CD4-positive, alpha-beta T cell (primary cell): ENCODE measurements at regions of chr1 and their contacts with region 1.

Region 1: GRCh38 chr1:227762233-227762911 is 27.1 kb downstream of the SNAP47 start:
- DNase-seq: peak; percentile 81 to 93 (median 86)
- ATAC-seq: peak; percentile 68
- H3K4me3 ChIP-seq: peak overlapping the region; percentile 6
- H3K4me3 Mint-ChIP-seq: peak overlapping the region; percentile 72
- H3K27ac ChIP-seq: peak overlapping the region in 1 of 2 donors; percentile 53
- H3K27ac Mint-ChIP-seq: peak overlapping the region; percentile 90
- H3K4me1 ChIP-seq: peaks cover 84% of the 10 kb centered on the region
- H3K4me1 Mint-ChIP-seq: peaks cover 75% of the 10 kb centered on the region
- H3K27me3 ChIP-seq: no peaks in the 10 kb centered on the region
- H3K27me3 Mint-ChIP-seq: no peaks in the 10 kb centered on the region
- CTCF ChIP-seq: peak; percentile 96

Region 2: DNA sequence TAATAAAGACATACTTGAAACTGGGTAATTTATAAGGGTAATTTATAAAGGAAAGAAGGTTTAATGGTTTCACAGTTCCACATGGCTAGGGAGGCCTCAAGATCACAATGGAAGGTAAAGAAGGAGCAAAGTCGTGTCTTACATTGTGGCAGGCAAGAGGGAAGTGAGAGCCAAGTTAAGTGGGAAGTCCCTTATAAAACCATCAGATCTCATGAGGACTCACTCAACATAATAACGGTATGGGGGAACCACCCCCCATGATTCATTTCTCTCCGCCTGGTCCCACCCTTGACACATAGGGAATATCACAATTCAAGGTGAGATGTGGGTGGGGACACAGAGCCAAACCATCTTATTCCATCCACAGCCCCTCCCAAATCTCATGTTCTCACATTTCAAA is 275.8 kb before region 1 on chr1:
- CTCF ChIA-PET with region 1: no interaction called
- POLR2A ChIA-PET with region 1: no interaction called
- intact Hi-C with region 1: loop called (anchors 1 to 5 kb)
- DNase-seq: peak in 1 of 14 experiments; percentile 7
- ATAC-seq: no peak
- H3K4me3 ChIP-seq: no peak overlapping the region
- H3K4me3 Mint-ChIP-seq: no peak overlapping the region
- H3K27ac ChIP-seq: no peak overlapping the region
- H3K27ac Mint-ChIP-seq: no peak overlapping the region
- H3K4me1 ChIP-seq: no peaks in the 10 kb centered on the region
- H3K4me1 Mint-ChIP-seq: no peaks in the 10 kb centered on the region
- H3K27me3 ChIP-seq: no peaks in the 10 kb centered on the region
- H3K27me3 Mint-ChIP-seq: peaks cover 3% of the 10 kb centered on the region
- CTCF ChIP-seq: no peak

Region 3: GRCh38 chr1:227787513-227788270 is 25.3 kb after region 1 on chr1:
- CTCF ChIA-PET with region 1: interaction called, 6 read pairs
- POLR2A ChIA-PET with region 1: interaction called, 37 read pairs
- intact Hi-C with region 1: loop called (anchors 2 kb)
- DNase-seq: peak; percentile 94 to 99 (median 96)
- ATAC-seq: peak; percentile 92
- H3K4me3 ChIP-seq: peak overlapping the region; percentile 74
- H3K4me3 Mint-ChIP-seq: peak overlapping the region; percentile 89
- H3K27ac ChIP-seq: peak overlapping the region in 1 of 2 donors; percentile 11
- H3K27ac Mint-ChIP-seq: peak overlapping the region; percentile 82
- H3K4me1 ChIP-seq: peaks cover 39% of the 10 kb centered on the region
- H3K4me1 Mint-ChIP-seq: peaks cover 34% of the 10 kb centered on the region
- H3K27me3 ChIP-seq: no peaks in the 10 kb centered on the region
- H3K27me3 Mint-ChIP-seq: no peaks in the 10 kb centered on the region
- CTCF ChIP-seq: no peak

Region 4: DNA sequence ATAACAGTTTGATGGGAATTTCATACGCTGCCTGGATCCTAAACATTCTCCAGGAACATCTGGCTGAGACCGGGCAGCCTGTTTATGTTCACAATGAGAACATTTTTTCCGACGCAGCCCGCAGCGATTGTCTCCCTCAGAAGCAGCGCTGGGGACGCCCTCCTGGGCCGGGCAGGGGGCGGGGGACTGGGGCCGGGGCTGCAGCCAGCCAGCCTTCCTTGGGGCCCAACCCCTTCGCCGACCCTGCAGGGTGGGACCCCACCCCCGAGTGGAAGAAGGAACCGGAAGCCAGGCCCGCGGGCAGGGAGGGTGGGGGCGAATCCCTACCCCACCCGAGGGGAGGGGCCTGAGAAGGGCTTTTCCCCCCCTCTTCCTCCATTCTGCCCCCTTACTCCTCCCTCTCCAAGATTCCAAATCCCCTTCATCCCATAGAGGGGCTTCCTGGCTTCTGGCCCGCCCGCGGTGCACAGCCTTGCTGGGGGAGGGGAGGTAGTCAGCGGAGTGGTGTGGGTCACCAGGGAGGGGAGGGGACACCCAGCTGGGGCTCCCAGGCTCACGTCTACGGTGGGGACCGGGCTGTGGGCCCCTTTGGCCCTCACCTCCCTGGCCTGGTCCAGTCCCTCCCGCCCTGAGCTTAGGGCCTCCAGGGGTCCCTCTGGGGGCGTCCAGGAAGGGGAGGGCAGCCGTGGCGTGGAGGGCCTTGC is 124.8 kb after region 1 on chr1:
- CTCF ChIA-PET with region 1: no interaction called
- POLR2A ChIA-PET with region 1: no interaction called
- intact Hi-C with region 1: loop called in 1 of 2 experiments (anchors 5 kb)
- DNase-seq: peak in 10 of 14 experiments; percentile 25 to 66 (median 48)
- ATAC-seq: peak; percentile 41
- H3K4me3 ChIP-seq: peak overlapping the region; percentile 44
- H3K4me3 Mint-ChIP-seq: peak overlapping the region; percentile 67
- H3K27ac ChIP-seq: peak overlapping the region in 1 of 2 donors; percentile 64
- H3K27ac Mint-ChIP-seq: peak overlapping the region; percentile 87
- H3K4me1 ChIP-seq: peaks cover 69% of the 10 kb centered on the region
- H3K4me1 Mint-ChIP-seq: peaks cover 39% of the 10 kb centered on the region
- H3K27me3 ChIP-seq: no peaks in the 10 kb centered on the region
- H3K27me3 Mint-ChIP-seq: no peaks in the 10 kb centered on the region
- CTCF ChIP-seq: no peak

Region 5: DNA sequence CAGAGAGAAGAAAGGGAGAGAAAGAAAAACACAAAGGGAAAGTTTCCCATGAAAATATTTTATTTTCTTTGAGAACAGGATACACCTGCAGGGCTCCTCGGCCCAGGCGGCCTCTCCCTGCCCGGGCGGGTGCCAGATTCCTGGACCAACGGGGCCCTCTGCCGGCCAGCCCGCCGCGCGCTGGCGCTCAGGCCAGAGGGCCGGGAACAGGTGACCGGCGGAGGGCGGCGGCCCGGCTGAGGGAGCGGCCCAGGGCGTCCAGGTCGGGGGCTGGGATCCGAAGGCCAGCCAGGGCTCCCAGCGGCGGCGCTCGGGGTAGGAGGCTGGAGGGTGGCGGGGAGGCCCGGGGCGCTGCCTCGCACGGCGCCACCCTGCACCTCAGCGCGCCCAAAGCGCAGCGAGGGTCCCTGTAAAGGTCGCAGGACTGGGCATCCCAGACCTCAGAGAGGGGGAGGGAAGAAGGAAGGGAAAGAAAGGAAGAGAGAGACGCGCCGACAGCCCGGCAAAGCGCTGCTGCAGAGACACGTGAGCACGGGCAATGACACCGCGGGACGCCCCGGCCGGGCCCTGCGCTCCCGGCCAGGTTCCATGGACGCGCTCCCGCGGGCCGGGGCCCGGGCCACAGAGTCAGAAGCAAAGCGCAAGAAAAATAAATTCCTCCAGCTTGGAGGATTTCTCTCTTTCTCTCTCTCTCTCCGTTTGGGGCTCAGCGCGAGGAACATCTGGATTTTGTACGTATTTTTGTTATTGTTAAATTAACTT is 184.4 kb after region 1 on chr1:
- CTCF ChIA-PET with region 1: interaction called, 6 read pairs
- POLR2A ChIA-PET with region 1: interaction called, 6 read pairs
- intact Hi-C with region 1: loop called (anchors 1 to 2 kb)
- DNase-seq: peak in 13 of 14 experiments; percentile 35 to 75 (median 52)
- ATAC-seq: peak; percentile 71
- H3K4me3 ChIP-seq: peak overlapping the region; percentile 33
- H3K4me3 Mint-ChIP-seq: peak overlapping the region; percentile 72
- H3K27ac ChIP-seq: no peak overlapping the region
- H3K27ac Mint-ChIP-seq: no peak overlapping the region
- H3K4me1 ChIP-seq: peaks cover 22% of the 10 kb centered on the region
- H3K4me1 Mint-ChIP-seq: no peaks in the 10 kb centered on the region
- H3K27me3 ChIP-seq: peaks cover 13 to 19% of the 10 kb centered on the region in 2 experiments
- H3K27me3 Mint-ChIP-seq: peaks cover 19% of the 10 kb centered on the region
- CTCF ChIP-seq: peak; percentile 87

Region 6: GRCh38 chr1:227954163-227954850 is 191.9 kb after region 1 on chr1:
- CTCF ChIA-PET with region 1: interaction called, 18 read pairs
- POLR2A ChIA-PET with region 1: no interaction called
- intact Hi-C with region 1: loop called in 1 of 2 experiments (anchors 1 kb)
- DNase-seq: peak in 1 of 14 experiments; percentile 0
- ATAC-seq: no peak
- H3K4me3 ChIP-seq: no peak overlapping the region
- H3K4me3 Mint-ChIP-seq: no peak overlapping the region
- H3K27ac ChIP-seq: no peak overlapping the region
- H3K27ac Mint-ChIP-seq: no peak overlapping the region
- H3K4me1 ChIP-seq: peaks cover 7% of the 10 kb centered on the region
- H3K4me1 Mint-ChIP-seq: no peaks in the 10 kb centered on the region
- H3K27me3 ChIP-seq: peaks cover 18 to 27% of the 10 kb centered on the region in 2 experiments
- H3K27me3 Mint-ChIP-seq: peaks cover 51% of the 10 kb centered on the region
- CTCF ChIP-seq: no peak